Activated CD4-positive, alpha-beta memory T cell treated with anti-CD3 and anti-CD28 coated beads for 36 hours (primary cell): ENCODE measurements at regions of chr17 and their contacts with region 1.

Region 1: GRCh38 chr17:36948717-36949460 is at the start of gene AATF:
- DNase-seq: peak; percentile 97
- H3K4me3 Mint-ChIP-seq: peak within 1 kb of the TSS; percentile 94
- H3K27ac Mint-ChIP-seq: peak within 1 kb of the TSS; percentile 89
- H3K4me1 Mint-ChIP-seq: peaks cover 46% of the 10 kb centered on the region
- H3K27me3 Mint-ChIP-seq: peaks cover 30% of the 10 kb centered on the region
- total RNA-seq, gene AATF: 85.6 to 89.1 TPM

Region 2: GRCh38 chr17:36722121-36722902 is 226.6 kb before region 1 on chr17:
- CTCF ChIA-PET with region 1: no interaction called
- POLR2A ChIA-PET with region 1: no interaction called
- intact Hi-C with region 1: loop called (anchors 5 kb)
- DNase-seq: peak; percentile 90
- H3K4me3 Mint-ChIP-seq: peak overlapping the region; percentile 78
- H3K27ac Mint-ChIP-seq: peak overlapping the region; percentile 97
- H3K4me1 Mint-ChIP-seq: peaks cover 42% of the 10 kb centered on the region
- H3K27me3 Mint-ChIP-seq: no peaks in the 10 kb centered on the region

Region 3: DNA sequence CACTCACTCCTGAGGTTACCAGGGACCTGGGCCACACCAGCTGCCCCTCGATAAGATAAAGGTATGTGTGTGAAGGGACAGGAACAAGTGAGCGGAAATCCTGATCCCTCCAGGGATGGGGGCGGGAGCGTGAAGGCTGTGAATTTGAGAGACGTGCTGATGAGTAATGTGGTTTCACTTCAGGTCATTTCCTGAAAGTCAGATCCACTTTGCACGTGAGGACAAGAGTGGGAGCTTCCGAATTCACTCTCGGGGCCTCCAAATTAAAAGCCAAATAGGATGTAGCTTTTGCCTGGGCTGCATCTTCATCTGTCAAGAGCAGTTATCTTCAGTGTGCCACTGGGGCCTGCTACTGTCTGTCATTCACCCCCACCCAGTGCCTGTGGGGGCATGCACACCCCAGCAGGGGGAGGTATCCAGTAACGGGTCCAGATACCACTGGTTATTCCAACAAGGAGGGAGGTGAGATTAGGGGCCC is 99.0 kb before region 1 on chr17:
- CTCF ChIA-PET with region 1: no interaction called
- POLR2A ChIA-PET with region 1: no interaction called
- intact Hi-C with region 1: loop called (anchors 5 kb)
- DNase-seq: peak; percentile 88
- H3K4me3 Mint-ChIP-seq: peak overlapping the region; percentile 62
- H3K27ac Mint-ChIP-seq: peak overlapping the region; percentile 82
- H3K4me1 Mint-ChIP-seq: peaks cover 36% of the 10 kb centered on the region
- H3K27me3 Mint-ChIP-seq: peaks cover under 1% of the 10 kb centered on the region

Region 4: DNA sequence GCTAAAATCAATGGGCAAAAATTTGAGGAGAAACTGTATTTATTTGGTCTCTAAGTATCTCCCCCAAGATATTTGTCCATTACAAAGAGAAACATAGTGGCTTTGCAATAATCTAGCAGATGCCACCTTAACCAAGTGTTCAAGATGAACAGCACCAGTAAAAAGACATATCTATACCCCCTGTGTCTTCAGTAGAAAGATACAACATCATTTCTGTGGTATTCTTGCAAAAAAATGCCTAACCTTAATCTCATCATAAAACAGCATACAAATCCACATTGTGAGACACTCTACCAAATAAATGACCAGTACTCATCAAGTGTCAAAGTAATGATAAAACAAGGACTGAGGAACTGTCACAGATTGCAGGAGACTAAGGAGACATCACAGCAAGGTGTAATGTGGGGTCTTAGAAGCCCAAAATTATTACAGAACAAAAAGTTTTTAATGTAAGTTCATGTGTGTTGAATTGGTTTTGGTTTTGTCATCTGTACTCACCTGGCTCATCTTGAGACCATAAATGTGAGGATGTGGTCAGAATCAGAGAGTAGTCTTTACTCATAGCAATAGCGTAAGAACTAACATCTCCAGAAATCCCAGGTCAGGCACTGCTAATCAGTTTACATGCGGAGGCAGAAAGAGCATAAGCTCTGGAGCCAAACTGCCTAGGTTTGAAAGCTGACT is 77.1 kb after region 1 on chr17:
- CTCF ChIA-PET with region 1: no interaction called
- POLR2A ChIA-PET with region 1: no interaction called
- intact Hi-C with region 1: loop called (anchors 5 kb)
- DNase-seq: peak; percentile 33
- H3K4me3 Mint-ChIP-seq: no peak overlapping the region
- H3K27ac Mint-ChIP-seq: peak overlapping the region; percentile 30
- H3K4me1 Mint-ChIP-seq: peaks cover 27% of the 10 kb centered on the region
- H3K27me3 Mint-ChIP-seq: no peaks in the 10 kb centered on the region

Region 5: DNA sequence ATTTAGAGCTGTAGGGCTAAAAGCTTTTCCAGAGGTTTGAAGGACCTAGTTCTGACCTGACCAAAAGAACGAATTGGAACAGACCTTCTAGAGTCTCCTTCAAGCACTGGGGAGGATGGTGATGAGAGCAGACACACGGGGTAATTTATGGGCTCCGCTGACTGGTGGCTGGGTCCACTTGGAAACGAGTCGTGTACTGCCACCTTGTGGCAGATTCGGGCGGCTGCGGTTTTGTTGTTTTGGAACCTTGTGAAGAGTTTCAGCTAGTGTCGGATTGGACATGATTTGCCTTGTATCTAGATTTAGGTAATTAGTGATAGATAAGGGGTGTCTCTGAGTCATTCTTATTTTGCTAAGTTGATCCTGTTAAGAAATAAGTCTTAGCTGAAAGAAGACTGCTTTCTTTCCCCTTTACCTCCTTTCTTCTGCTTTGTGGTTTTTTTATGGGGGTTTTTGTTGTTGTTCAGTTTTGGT is 98.8 kb after region 1 on chr17:
- CTCF ChIA-PET with region 1: interaction called, 6 read pairs
- POLR2A ChIA-PET with region 1: no interaction called
- intact Hi-C with region 1: loop called (anchors 5 kb)
- DNase-seq: peak; percentile 89
- H3K4me3 Mint-ChIP-seq: no peak overlapping the region
- H3K27ac Mint-ChIP-seq: peak overlapping the region; percentile 54
- H3K4me1 Mint-ChIP-seq: peaks cover 10% of the 10 kb centered on the region
- H3K27me3 Mint-ChIP-seq: no peaks in the 10 kb centered on the region

Region 6: GRCh38 chr17:37744961-37745800 is 796.3 kb after region 1 on chr17 and contains the start of gene HNF1B:
- CTCF ChIA-PET with region 1: no interaction called
- POLR2A ChIA-PET with region 1: no interaction called
- intact Hi-C with region 1: loop called (anchors 10 kb)
- DNase-seq: peak; percentile 38
- H3K4me3 Mint-ChIP-seq: peak within 1 kb of the TSS; percentile 23
- H3K27ac Mint-ChIP-seq: no peak within 1 kb of the TSS
- H3K4me1 Mint-ChIP-seq: peaks cover 19% of the 10 kb centered on the region
- H3K27me3 Mint-ChIP-seq: peaks cover 58% of the 10 kb centered on the region
- total RNA-seq, gene HNF1B: not detected